Activated naive CD4-positive, alpha-beta T cell treated with anti-CD3 and anti-CD28 coated beads for 36 hours (primary cell): ENCODE measurements at regions of chr7 and their contacts with region 1.

Region 1: GRCh38 chr7:148987010-148987750 is 41.1 kb downstream of the PDIA4 start:
- DNase-seq: peak; percentile 88
- H3K4me3 Mint-ChIP-seq: peak overlapping the region; percentile 98
- H3K27ac Mint-ChIP-seq: peak overlapping the region; percentile 93
- H3K4me1 Mint-ChIP-seq: peaks cover 40% of the 10 kb centered on the region
- H3K27me3 Mint-ChIP-seq: peaks cover 7% of the 10 kb centered on the region

Region 2: GRCh38 chr7:148940702-148941597 is 46.2 kb before region 1 on chr7:
- CTCF ChIA-PET with region 1: no interaction called
- intact Hi-C with region 1: loop called (anchors 1 kb)
- DNase-seq: peak; percentile 68
- H3K4me3 Mint-ChIP-seq: peak overlapping the region; percentile 94
- H3K27ac Mint-ChIP-seq: peak overlapping the region; percentile 98
- H3K4me1 Mint-ChIP-seq: peaks cover 15% of the 10 kb centered on the region
- H3K27me3 Mint-ChIP-seq: no peaks in the 10 kb centered on the region

Region 3: GRCh38 chr7:149090397-149091195 is 103.4 kb after region 1 on chr7 and contains the start of gene ZNF786:
- CTCF ChIA-PET with region 1: no interaction called
- intact Hi-C with region 1: loop called (anchors 1 kb)
- DNase-seq: peak; percentile 94
- H3K4me3 Mint-ChIP-seq: peak within 1 kb of the TSS; percentile 90
- H3K27ac Mint-ChIP-seq: peak within 1 kb of the TSS; percentile 99
- H3K4me1 Mint-ChIP-seq: peaks cover 20% of the 10 kb centered on the region
- H3K27me3 Mint-ChIP-seq: no peaks in the 10 kb centered on the region
- total RNA-seq, gene ZNF786: 2.1 to 2.2 TPM

Region 4: DNA sequence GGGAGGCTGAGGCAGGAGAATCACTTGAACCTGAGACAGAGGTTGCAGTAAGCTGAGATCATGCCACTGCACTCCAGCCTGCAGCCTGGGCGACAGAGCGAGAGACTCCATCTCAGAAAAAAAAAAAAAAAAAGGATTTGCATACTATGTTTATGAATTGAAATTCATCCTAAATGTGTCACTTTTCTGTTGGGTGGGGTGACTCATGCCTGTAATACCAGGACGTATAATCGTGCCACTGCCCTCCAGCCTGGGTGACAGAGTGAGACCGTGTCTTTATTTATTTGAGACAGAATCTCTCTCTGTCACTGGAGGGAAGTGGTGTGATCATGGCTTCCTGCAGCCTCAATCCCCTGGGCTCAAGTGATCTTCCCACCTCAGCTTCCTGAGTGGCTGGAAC is 258.1 kb after region 1 on chr7:
- CTCF ChIA-PET with region 1: no interaction called
- intact Hi-C with region 1: loop called (anchors 2 kb)
- DNase-seq: peak; percentile 75
- H3K4me3 Mint-ChIP-seq: no peak overlapping the region
- H3K27ac Mint-ChIP-seq: peak overlapping the region; percentile 91
- H3K4me1 Mint-ChIP-seq: peaks cover 75% of the 10 kb centered on the region
- H3K27me3 Mint-ChIP-seq: no peaks in the 10 kb centered on the region

Region 5: GRCh38 chr7:149284850-149285626 is 297.9 kb after region 1 on chr7:
- CTCF ChIA-PET with region 1: no interaction called
- intact Hi-C with region 1: loop called (anchors 1 kb)
- DNase-seq: peak; percentile 99
- H3K4me3 Mint-ChIP-seq: peak overlapping the region; percentile 79
- H3K27ac Mint-ChIP-seq: no peak overlapping the region
- H3K4me1 Mint-ChIP-seq: peaks cover 36% of the 10 kb centered on the region
- H3K27me3 Mint-ChIP-seq: no peaks in the 10 kb centered on the region